Left colon (tissue), 2 donors: ENCODE measurements at regions of chr6 and their contacts with region 1.

Region 1: DNA sequence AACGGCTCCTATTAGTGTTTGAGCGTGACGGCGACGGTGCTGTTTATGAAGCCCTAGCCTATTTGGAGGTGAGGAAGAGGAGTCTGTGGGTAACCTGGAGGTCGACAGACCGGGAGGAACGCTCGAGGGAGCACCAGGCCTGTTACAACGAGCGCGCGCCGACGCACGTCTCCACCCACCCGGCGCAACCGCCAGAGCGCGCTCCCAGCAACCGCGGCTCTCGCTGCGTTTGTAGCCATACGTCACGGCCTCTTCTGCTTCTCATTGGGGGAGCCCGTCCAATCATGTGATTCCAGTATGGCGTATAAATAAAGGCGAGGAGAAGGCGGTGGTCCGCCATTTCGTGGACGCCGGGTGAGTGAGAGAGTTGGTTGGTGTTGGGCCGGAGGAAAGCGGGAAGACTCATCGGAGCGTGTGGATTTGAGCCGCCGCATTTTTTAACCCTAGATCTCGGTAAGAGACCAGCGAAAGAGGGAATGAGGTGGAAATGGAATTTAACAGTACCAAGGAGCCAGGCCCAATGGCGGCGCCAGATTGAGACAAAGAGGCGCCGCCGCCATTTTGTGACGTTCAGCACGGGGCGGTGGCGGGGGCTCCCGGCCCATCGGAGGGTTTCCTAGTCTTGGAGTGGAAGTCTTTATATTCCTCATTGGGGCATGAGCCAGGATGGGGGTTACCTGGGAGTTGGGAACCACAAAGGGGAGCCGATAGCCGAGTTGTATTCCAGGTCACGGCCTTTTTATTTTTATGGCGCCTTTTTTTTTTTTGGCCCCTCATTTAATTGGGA is at the start of gene SRSF3:
- DNase-seq: peak; percentile 96 to 98
- ATAC-seq: peak; percentile 91
- total RNA-seq, gene SRSF3: 178 to 242 TPM

Region 2: DNA sequence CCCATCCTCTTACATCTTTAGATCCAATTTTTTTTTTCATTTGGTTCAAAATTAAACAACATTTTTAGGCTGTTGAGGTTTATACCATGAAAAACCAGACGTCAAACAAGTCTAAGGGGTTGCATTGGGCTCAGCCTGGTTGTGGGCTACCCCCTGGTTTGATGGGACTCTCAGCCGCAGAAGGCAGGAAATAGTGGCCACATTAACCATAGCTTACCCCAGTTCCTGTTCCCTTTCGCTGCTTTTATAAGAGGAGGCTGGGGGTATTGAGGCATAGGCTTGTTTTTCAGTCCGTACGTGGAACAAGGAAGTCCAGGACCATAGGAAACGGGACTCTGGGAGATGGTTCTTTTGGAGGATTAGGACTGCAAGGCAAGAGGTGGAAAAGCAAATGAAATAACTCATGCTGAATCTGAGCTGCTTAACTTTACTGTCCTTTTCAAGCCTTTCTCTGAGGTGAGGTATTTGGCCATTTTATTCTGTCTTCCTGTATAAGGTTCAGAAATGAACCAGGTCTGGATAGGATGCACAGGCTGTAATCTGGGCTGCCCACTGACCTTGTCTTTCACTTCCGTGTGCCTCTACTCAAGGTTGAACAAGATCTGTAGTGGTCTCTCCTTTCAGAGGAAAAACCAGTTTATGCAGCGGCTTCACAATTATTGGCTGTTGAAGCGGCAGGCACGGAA is 390.0 kb before region 1 on chr6:
- intact Hi-C with region 1: no loop called
- DNase-seq: no peak
- ATAC-seq: no peak

Region 3: DNA sequence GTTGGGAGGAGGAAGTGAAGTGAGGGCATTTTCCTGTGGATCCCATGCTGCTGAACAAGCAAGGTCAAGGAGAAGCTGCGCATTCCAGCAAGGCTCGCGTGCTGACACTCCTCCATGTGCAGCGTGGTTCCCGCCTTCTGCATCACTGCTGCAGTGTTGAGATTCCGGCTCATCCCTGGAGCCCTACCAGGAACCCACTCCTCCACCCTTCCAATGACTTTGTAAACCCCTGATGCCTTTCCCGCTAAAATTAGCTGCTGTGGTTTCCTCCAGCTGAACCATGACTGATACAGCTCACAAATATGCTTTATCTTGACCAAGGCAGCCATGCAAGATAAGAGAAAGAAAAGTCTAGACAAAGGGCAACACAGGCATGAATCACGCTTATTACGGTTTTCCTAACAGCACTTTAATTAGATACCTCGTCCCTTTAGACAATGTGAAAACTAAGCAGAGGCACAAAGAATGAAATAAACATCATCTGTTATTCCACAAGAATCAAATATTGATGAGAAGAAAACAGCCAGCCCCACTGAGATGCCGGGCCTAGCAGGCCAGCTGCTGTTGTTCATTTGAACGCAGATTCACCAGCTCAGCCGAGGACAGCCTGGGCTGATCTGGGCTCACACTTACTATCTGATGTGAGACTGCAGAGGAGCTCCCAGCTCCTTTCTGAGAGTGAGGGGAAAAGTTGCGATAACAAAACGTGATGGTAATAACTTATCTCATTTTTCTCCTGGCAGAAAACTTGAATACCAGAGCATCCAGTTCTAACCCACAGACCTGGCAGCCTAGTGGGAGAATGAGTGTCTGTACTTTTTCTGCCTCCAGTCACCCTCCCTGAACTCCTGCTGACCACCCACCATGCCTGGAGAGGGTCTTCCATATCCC is 243.3 kb before region 1 on chr6:
- intact Hi-C with region 1: no loop called
- DNase-seq: no peak
- ATAC-seq: peak; percentile 40

Region 4: GRCh38 chr6:36442671-36443470 is 151.4 kb before region 1 on chr6 and contains the starts of genes KCTD20 and PXT1:
- intact Hi-C with region 1: loop called in 1 of 2 experiments (anchors 10 kb)
- DNase-seq: peak; percentile 90 to 91
- ATAC-seq: peak; percentile 83
- total RNA-seq, gene KCTD20: 22.0 to 28.4 TPM
- total RNA-seq, gene PXT1: not detected

Region 5: GRCh38 chr6:36546920-36547645 is 47.1 kb before region 1 on chr6 and contains the start of gene STK38:
- intact Hi-C with region 1: loop called in 1 of 2 experiments (anchors 5 kb)
- DNase-seq: peak; percentile 95 to 96
- ATAC-seq: peak; percentile 92
- total RNA-seq, gene STK38: 66.0 to 76.6 TPM